ENCODE measurements at regions of chr19 and their contacts with region 1.

Region 1: DNA sequence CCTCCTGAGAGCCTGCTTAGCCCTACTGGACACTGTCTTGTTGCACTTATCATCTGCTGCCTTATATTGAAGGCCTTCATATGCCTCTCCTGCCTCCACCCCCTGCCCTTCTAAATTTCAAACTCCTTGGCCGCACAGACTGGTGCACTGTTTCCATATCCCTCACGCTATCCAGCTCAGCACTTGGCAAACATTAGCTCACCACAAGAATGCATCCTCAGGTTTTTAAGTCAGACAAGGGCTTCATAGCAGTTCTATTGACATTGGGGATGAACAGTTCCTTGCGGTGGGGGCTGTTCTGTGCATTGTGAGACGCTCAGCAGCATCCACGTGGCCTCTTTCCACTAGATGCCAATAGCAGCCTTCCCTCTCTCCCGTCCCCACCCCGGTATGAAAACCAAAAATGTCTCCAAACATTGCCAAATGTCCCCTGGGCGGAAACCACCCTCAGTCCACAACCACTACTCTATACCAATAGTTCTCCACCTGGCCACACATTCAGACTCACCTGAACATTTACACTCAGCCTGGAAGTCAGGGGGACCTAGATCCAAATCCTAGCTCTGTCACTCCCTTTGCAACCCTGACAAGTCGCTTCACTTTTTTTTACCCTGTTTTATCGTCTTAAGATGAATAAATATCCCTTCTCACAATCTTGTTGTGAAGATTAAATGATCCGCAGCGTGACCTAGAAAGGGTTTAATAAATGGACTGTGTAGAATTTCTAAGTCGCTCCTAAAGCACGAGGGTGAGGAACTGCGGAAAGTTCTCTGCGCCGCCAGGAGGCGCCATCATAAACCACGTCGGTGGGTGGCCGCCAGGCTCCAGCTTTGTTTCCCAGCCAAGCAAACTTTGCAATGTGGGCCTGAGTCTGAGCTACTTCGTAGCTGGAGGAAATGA is 3.6 kb upstream of the CEACAM3 start:
- DNase-seq: peak; percentile 53 to 67 (median 57)
- H3K4me3 ChIP-seq: no peak overlapping the region
- H3K4me3 Mint-ChIP-seq: peak overlapping the region in 1 of 2 donors; percentile 26
- H3K27ac ChIP-seq: no peak overlapping the region
- H3K27ac Mint-ChIP-seq: no peak overlapping the region
- H3K4me1 ChIP-seq: peaks cover 34 to 38% of the 10 kb centered on the region in 2 donors
- H3K4me1 Mint-ChIP-seq: peaks cover 39% of the 10 kb centered on the region
- H3K27me3 ChIP-seq: peaks cover 2% of the 10 kb centered on the region in 2 donors
- H3K27me3 Mint-ChIP-seq: peaks cover 13 to 19% (median 15%) of the 10 kb centered on the region in 3 donors
- CTCF ChIP-seq: peak; percentile 89

Region 2: DNA sequence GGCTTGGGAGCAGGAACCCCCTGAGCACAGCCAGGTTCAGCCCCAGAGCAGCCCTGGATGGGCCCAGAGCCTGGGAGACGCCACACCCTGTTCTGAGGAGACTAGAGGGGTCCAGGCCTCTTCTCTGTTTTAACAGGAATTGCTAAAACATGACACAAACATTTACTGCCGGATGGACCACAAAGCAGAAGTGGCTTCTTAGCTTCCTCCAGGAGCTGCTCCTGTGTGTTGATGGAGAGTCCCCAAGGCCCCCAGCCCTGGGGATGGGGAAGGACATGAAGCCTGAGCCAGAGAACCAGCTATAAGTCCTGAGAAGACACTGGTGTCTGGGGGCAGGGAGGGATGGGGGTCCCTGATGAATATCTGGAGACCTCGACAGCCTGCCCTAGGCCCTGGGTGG is 18.3 kb after region 1 on chr19:
- intact Hi-C with region 1: loop called in 1 of 2 experiments (anchors 2 kb)
- DNase-seq: peak; percentile 74 to 94 (median 86)
- H3K4me3 ChIP-seq: peak overlapping the region in 1 of 3 experiments; percentile 60
- H3K4me3 Mint-ChIP-seq: peak overlapping the region; percentile 49 to 65
- H3K27ac ChIP-seq: peak overlapping the region; percentile 88
- H3K27ac Mint-ChIP-seq: peak overlapping the region; percentile 89 to 97 (median 94)
- H3K4me1 ChIP-seq: peaks cover 55 to 56% of the 10 kb centered on the region in 2 donors
- H3K4me1 Mint-ChIP-seq: peaks cover 62% of the 10 kb centered on the region
- H3K27me3 ChIP-seq: no peaks in the 10 kb centered on the region
- H3K27me3 Mint-ChIP-seq: peaks cover 2 to 3% (median 3%) of the 10 kb centered on the region in 3 donors
- CTCF ChIP-seq: no peak

Region 3: GRCh38 chr19:41927497-41928192 is 134.9 kb after region 1 on chr19:
- intact Hi-C with region 1: no loop called
- DNase-seq: no peak
- H3K4me3 ChIP-seq: peak overlapping the region in 1 of 3 experiments; percentile 69
- H3K4me3 Mint-ChIP-seq: peak overlapping the region; percentile 66 to 94
- H3K27ac ChIP-seq: no peak overlapping the region
- H3K27ac Mint-ChIP-seq: no peak overlapping the region
- H3K4me1 ChIP-seq: peaks cover 4 to 15% of the 10 kb centered on the region in 2 donors
- H3K4me1 Mint-ChIP-seq: peaks cover 13% of the 10 kb centered on the region
- H3K27me3 ChIP-seq: peaks cover 47 to 89% of the 10 kb centered on the region in 2 donors
- H3K27me3 Mint-ChIP-seq: peaks cover 0 to 50% (median 49%) of the 10 kb centered on the region in 3 donors
- CTCF ChIP-seq: no peak

Measured in CD14-positive monocyte (primary cell).